Endothelial cell of umbilical vein (primary cell): ENCODE measurements at regions of chr15 and their contacts with region 1.

Region 1: GRCh38 chr15:57092252-57092651 is 173.8 kb downstream of the TCF12 start:
- DNase-seq: no peak
- H3K4me3 ChIP-seq: no peak overlapping the region
- H3K27ac ChIP-seq: no peak overlapping the region
- H3K4me1 ChIP-seq: peaks cover 10% of the 10 kb centered on the region
- H3K27me3 ChIP-seq: no peaks in the 10 kb centered on the region
- CTCF ChIP-seq: no peak
- POLR2A ChIP-seq: no peak

Region 2: DNA sequence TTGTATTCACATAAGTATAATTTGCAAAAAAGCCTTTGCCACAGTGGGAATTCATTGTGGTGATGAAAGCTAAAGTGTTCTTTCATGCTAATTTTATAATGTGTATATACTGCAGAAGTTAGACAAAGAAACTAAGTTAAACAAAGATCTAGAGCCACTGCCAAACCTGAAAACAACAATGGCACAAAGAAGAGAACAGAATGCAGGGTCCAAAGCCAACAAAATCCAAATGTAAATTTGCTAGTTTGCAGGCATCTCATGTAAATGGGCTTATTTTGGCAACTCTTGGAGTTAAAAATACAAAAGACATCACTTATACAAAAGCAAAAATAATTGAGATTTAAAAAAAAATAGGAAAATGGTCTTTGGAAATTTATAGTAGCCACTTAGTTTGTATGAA is 50.8 kb before region 1 on chr15:
- CTCF ChIA-PET with region 1: no interaction called
- POLR2A ChIA-PET with region 1: no interaction called
- dilution Hi-C with region 1: no loop called
- intact Hi-C with region 1: no loop called
- DNase-seq: peak; percentile 29
- H3K4me3 ChIP-seq: no peak overlapping the region
- H3K27ac ChIP-seq: no peak overlapping the region
- H3K4me1 ChIP-seq: no peaks in the 10 kb centered on the region
- H3K27me3 ChIP-seq: no peaks in the 10 kb centered on the region
- CTCF ChIP-seq: no peak
- POLR2A ChIP-seq: no peak

Region 3: DNA sequence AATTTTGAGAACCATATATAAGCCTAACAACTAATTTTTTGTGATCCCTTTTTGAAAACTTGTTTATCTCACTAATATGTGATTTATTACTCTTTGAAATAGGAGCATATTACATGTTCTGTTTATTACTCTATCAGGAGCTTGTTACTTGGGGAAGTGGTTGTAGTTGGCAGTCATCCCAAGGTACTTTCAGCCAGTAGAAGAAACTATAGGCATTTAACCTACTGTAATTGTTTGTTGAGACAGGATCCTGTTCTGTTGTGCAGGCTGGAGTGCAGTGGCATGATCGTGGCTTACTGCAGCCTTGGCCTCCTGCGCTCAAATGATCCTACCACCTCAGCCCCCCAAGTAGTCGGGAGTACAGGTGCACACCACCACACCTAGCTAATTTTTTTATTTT is 21.8 kb after region 1 on chr15:
- CTCF ChIA-PET with region 1: interaction called, 12 read pairs
- POLR2A ChIA-PET with region 1: no interaction called
- dilution Hi-C with region 1: no loop called
- intact Hi-C with region 1: no loop called
- DNase-seq: peak; percentile 83
- H3K4me3 ChIP-seq: no peak overlapping the region
- H3K27ac ChIP-seq: no peak overlapping the region
- H3K4me1 ChIP-seq: peaks cover 16% of the 10 kb centered on the region
- H3K27me3 ChIP-seq: no peaks in the 10 kb centered on the region
- CTCF ChIP-seq: no peak
- POLR2A ChIP-seq: no peak

Region 4: DNA sequence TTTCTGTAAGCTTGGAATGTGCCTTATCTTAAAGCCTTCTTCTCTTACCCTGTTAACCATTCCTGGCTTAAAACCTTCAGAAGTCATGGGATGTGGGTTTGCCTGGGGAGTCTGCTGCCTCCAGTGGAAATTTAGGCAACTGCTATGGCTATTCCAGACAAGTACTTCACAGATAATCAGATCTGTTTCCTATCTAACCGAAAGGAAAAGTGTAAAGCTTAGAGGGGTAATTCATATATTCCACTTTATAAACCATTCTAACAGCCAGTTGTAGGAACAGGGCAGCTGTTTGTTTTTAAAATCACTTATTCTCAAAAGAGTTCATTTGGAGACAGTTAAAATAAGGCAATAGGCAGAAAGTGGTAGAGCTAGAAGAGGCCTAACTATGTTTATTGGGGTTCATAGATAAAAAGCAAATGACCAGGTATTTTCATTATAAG is 46.1 kb after region 1 on chr15:
- CTCF ChIA-PET with region 1: interaction called, 10 read pairs
- POLR2A ChIA-PET with region 1: no interaction called
- dilution Hi-C with region 1: no loop called
- intact Hi-C with region 1: no loop called
- DNase-seq: peak; percentile 75
- H3K4me3 ChIP-seq: no peak overlapping the region
- H3K27ac ChIP-seq: no peak overlapping the region
- H3K4me1 ChIP-seq: peaks cover 33% of the 10 kb centered on the region
- H3K27me3 ChIP-seq: no peaks in the 10 kb centered on the region
- CTCF ChIP-seq: peak; percentile 61 to 74
- POLR2A ChIP-seq: no peak

Region 5: GRCh38 chr15:57165992-57166391 is 73.7 kb after region 1 on chr15:
- CTCF ChIA-PET with region 1: no interaction called
- POLR2A ChIA-PET with region 1: no interaction called
- dilution Hi-C with region 1: no loop called
- intact Hi-C with region 1: no loop called
- DNase-seq: peak; percentile 42
- H3K4me3 ChIP-seq: no peak overlapping the region
- H3K27ac ChIP-seq: no peak overlapping the region
- H3K4me1 ChIP-seq: peaks cover 7% of the 10 kb centered on the region
- H3K27me3 ChIP-seq: no peaks in the 10 kb centered on the region
- CTCF ChIP-seq: no peak
- POLR2A ChIP-seq: no peak